Astrocyte of the cerebellum (primary cell): ENCODE measurements at regions of chr12 and their contacts with region 1.

Region 1: GRCh38 chr12:30970559-30971197 is 44.1 kb downstream of the TSPAN11 start:
- DNase-seq: no peak
- H3K4me3 ChIP-seq: no peak overlapping the region
- CTCF ChIP-seq: no peak

Region 2: DNA sequence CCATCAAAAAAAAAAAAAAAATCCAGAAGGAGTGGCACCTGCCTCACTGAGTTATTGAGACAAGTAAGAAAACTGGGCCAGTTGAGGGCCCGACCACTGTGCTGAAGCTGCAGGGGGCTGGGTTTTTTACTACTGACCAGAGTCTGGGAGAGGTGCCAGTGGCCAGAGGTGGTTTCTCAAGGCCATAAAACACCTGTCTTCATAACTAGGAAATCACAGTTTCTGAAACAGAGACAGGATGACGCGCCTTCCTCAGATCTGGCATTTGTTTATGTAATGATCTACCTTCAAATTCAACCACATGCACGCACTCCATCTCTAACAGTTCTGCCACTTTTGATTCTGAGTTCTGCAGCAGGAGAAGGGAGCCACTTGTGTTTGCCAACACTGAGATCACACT is 31.4 kb before region 1 on chr12:
- in situ Hi-C with region 1: loop called (anchors 5 kb)
- DNase-seq: peak; percentile 46
- H3K4me3 ChIP-seq: no peak overlapping the region
- CTCF ChIP-seq: no peak